ENCODE measurements at regions of chr22 and their contacts with region 1.

Region 1: DNA sequence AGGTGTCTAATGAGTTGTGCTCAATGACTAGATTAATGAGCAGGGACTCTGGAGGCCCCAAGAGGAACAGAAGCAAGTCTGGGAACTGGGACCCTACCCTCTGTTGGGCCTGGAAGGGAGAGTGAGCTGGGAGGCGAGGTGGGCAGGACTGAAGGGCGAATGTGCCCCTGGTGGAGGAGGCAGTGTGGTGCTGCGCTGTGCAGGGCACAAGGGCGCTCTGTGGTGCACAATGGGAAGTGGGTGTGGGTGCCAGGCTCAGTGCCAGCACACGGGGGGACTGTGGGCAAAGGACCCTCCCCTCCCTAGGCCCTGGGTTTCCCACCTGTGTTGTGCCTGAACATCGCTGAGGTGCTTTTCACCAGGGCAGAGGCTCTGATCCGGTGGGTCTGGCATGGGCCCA is 57.5 kb upstream of the TTLL12 start:
- DNase-seq: no peak
- H3K4me3 ChIP-seq: no peak overlapping the region
- CTCF ChIP-seq: no peak
- POLR2A ChIP-seq: no peak

Region 2: DNA sequence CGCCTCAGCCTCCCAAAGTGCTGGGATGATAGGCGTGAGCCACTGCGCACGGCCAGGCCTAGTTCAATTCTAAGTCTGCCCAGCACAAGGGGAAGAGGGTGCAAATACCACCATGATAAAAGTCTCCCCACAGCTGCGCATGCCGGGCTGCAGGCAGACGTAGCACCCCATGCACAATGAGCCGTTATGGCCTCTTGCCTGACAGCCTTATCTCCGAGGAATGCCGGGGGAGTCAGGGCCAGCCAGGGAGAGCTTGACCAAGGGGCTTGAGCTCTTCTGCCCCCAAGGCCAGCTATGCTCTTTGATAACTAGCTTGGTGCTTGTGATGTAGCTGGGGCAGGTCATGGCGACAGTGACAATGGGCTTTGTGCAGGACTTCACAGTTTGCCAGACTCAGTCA is 112.5 kb after region 1 on chr22:
- intact Hi-C with region 1: loop called (anchors 10 kb)
- DNase-seq: no peak
- H3K4me3 ChIP-seq: no peak overlapping the region
- CTCF ChIP-seq: no peak
- POLR2A ChIP-seq: no peak